Activated CD4-positive, alpha-beta T cell treated with anti-CD3 and anti-CD28 coated beads, Interleukin-2, amount 10 ng/mL, durations not matched to agents 24 days and 14 days (primary cell): ENCODE measurements at regions of chr1 and their contacts with region 1.

Region 1: GRCh38 chr1:19186001-19186400 is 24.1 kb downstream of the UBR4 start:
- DNase-seq: no peak
- H3K4me3 Mint-ChIP-seq: peak overlapping the region; percentile 49
- H3K27ac Mint-ChIP-seq: peak overlapping the region; percentile 88
- H3K4me1 Mint-ChIP-seq: peaks cover 27% of the 10 kb centered on the region
- H3K27me3 Mint-ChIP-seq: no peaks in the 10 kb centered on the region

Region 2: DNA sequence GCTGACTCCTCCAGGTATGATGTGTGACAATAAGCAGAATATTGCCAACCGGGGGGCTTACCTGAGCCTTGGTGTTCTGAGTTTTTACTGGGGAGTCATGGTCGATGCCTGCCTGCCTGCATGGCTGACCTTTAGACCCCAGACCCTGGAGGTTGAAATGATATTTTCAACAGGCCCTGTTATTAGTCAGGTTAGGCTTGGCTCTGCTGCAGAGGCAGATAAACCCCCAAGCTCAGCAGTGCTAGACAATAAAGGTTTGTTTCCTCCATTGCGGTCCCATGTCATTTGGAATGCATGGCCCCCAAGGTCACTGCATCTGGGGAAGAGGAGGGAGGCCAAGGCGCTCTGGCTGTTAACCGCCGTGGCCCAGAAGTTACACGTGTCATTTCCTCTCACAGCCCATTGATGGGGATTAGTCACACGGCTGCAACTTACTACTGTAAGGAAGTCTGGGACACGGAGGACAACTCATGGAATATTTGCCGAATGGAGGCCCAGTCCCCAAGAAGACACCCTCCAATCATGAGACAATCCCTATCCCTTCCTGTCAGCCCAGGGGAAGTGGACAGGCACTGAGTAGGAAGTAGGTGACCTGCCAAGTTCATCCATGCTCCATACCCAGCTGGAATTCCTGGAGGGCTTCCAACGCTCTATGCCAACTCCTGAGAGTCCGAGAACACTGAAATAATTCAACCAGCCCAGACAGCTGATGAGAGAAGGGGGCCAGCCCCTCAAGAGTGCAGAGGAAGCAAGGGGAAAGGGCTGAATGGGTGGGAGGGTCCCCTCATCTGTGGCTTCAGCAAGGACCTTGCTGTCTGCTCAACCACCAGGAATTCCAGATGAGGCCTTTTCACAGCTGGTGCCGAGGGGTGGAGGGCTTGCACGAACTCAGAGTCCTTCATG is 423.8 kb before region 1 on chr1:
- intact Hi-C with region 1: no loop called
- DNase-seq: no peak
- H3K4me3 Mint-ChIP-seq: no peak overlapping the region
- H3K27ac Mint-ChIP-seq: no peak overlapping the region
- H3K4me1 Mint-ChIP-seq: no peaks in the 10 kb centered on the region
- H3K27me3 Mint-ChIP-seq: peaks cover 7% of the 10 kb centered on the region

Region 3: GRCh38 chr1:19169642-19170041 is 16.4 kb before region 1 on chr1:
- intact Hi-C with region 1: loop called (anchors 2 kb)
- DNase-seq: no peak
- H3K4me3 Mint-ChIP-seq: peak overlapping the region; percentile 12
- H3K27ac Mint-ChIP-seq: peak overlapping the region; percentile 71
- H3K4me1 Mint-ChIP-seq: peaks cover 13% of the 10 kb centered on the region
- H3K27me3 Mint-ChIP-seq: no peaks in the 10 kb centered on the region

Region 4: DNA sequence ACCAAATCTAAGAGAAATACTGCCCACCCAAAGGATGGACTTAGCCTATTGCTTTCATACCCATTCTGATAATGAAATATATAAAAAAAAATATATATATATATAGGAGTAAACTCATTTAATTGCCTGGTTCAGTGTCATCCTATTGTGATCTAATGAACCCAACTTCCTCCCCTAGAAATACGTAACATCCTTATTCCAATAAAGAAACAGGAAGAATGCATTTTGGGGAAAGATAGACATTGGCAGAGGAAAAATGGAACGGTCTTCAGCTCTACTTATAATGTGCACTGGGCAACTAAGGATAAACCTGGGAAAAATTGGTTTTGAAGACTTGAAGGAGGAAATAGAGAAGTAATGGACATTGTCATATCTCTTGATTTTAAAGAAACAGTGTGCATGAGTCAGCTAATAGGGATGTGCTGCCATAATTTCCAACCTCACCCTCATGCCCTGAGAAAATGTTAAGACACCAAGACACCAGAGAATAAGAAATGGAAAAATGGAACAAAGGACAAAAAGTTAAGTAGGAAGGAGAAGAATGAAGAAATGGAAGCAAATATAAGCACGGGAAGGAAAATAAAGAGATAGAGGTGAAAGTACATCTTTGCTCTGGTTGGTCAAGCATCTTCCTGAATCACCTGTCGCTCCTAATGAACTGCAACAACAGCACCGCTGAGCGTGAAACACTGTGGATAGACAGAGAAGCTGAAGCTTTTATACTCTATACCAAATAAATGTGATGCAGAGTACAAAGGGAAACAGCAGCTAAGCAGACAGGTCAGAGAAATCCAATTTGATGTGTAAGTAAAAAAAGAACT is 18.7 kb after region 1 on chr1:
- intact Hi-C with region 1: loop called (anchors 1 kb)
- DNase-seq: no peak
- H3K4me3 Mint-ChIP-seq: no peak overlapping the region
- H3K27ac Mint-ChIP-seq: peak overlapping the region; percentile 25
- H3K4me1 Mint-ChIP-seq: peaks cover 47% of the 10 kb centered on the region
- H3K27me3 Mint-ChIP-seq: no peaks in the 10 kb centered on the region

Region 5: GRCh38 chr1:19209990-19210771 is 24.2 kb after region 1 on chr1 and contains the start of gene UBR4:
- intact Hi-C with region 1: loop called (anchors 1 kb)
- DNase-seq: peak; percentile 99
- H3K4me3 Mint-ChIP-seq: peak within 1 kb of the TSS; percentile 97
- H3K27ac Mint-ChIP-seq: peak within 1 kb of the TSS; percentile 94
- H3K4me1 Mint-ChIP-seq: peaks cover 51% of the 10 kb centered on the region
- H3K27me3 Mint-ChIP-seq: no peaks in the 10 kb centered on the region
- total RNA-seq, gene UBR4: 145 and 162 TPM in 2 replicates

Region 6: DNA sequence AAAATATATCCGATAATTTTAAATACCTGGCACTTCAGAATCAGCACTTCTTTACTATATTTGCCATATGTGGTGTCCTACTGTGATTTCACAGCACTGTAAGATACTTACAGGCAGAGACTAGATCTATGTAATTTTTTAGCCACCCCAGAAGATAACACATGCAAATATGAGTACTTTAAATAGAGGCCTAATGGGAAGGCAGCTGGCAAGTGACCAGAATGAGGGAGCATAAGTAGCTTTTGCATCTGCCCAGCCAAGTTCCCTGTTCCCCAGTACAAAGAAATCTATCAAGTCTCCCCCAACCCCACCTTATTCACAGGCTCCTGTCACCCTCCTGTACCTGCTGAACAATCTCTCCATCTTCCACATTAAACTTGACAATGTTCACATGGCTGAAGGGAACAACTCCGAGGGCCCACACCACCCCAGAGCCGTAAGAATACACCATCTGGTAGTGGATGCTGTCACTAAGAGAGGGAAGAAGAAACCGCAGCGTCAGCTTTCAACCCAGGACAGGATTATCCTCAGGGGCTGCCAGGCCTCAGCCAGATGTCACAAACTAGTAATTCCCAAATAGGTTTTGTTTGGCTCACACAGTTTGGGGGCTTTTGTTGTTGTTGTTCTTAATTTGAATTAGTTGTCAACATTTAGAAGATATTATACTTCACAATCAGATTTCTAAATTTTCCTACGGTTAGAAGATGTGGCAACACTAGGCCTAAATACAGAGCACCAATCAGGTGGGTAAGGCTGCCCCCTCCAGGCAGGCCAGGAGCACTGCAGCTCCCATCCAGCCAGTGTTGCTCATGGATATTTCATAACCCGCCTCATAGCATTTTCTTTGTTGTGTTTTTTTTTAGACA is 54.9 kb after region 1 on chr1:
- intact Hi-C with region 1: loop called (anchors 5 kb)
- DNase-seq: peak; percentile 92
- H3K4me3 Mint-ChIP-seq: no peak overlapping the region
- H3K27ac Mint-ChIP-seq: no peak overlapping the region
- H3K4me1 Mint-ChIP-seq: no peaks in the 10 kb centered on the region
- H3K27me3 Mint-ChIP-seq: no peaks in the 10 kb centered on the region